ENCODE measurements at regions of chr5 and their contacts with region 1.

Region 1: GRCh38 chr5:53170748-53171349 is 61.3 kb upstream of the MOCS2 start:
- DNase-seq: no peak
- ATAC-seq: peak; percentile 66; the same call in 2 of the 3 replicates
- H3K4me3 ChIP-seq: no peak overlapping the region
- H3K27ac ChIP-seq: no peak overlapping the region
- H3K4me1 ChIP-seq: no peaks in the 10 kb centered on the region
- H3K27me3 ChIP-seq: no peaks in the 10 kb centered on the region
- CTCF ChIP-seq: peak; percentile 48 to 56 (median 56); a peak in 5 of 6 replicates
- EP300 ChIP-seq: no peak
- POLR2A ChIP-seq: no peak
- RAD21 ChIP-seq: peak; percentile 80

Region 2: GRCh38 chr5:52943285-52943684 is 227.6 kb before region 1 on chr5:
- CTCF ChIA-PET with region 1: no interaction called
- POLR2A ChIA-PET with region 1: no interaction called
- RAD21 ChIA-PET with region 1: no interaction called
- SMC1A ChIA-PET with region 1: no interaction called
- in situ Hi-C with region 1: no loop called
- intact Hi-C with region 1: no loop called
- DNase-seq: no peak
- ATAC-seq: peak; percentile 73
- H3K4me3 ChIP-seq: no peak overlapping the region
- H3K27ac ChIP-seq: no peak overlapping the region
- H3K4me1 ChIP-seq: no peaks in the 10 kb centered on the region
- H3K27me3 ChIP-seq: no peaks in the 10 kb centered on the region
- CTCF ChIP-seq: peak in 2 of 3 experiments; percentile 9 to 19; a peak in 2 of 6 replicates
- EP300 ChIP-seq: no peak
- POLR2A ChIP-seq: no peak
- RAD21 ChIP-seq: no peak

Region 3: GRCh38 chr5:53425598-53426511 is 255.0 kb after region 1 on chr5:
- CTCF ChIA-PET with region 1: no interaction called
- POLR2A ChIA-PET with region 1: no interaction called
- RAD21 ChIA-PET with region 1: no interaction called
- SMC1A ChIA-PET with region 1: no interaction called
- in situ Hi-C with region 1: no loop called
- intact Hi-C with region 1: loop called (anchors 5 kb)
- DNase-seq: no peak
- ATAC-seq: peak; percentile 67
- H3K4me3 ChIP-seq: no peak overlapping the region
- H3K27ac ChIP-seq: no peak overlapping the region
- H3K4me1 ChIP-seq: no peaks in the 10 kb centered on the region
- H3K27me3 ChIP-seq: 0 out of 4 replicates have a peak, but pooled peaks cover 0 to 2% of the 10 kb centered on the region in 2 experiments
- CTCF ChIP-seq: peak in 2 of 3 experiments; percentile 21 to 42; a peak in 2 of 6 replicates
- EP300 ChIP-seq: no peak
- POLR2A ChIP-seq: no peak
- RAD21 ChIP-seq: peak; percentile 55

Region 4: DNA sequence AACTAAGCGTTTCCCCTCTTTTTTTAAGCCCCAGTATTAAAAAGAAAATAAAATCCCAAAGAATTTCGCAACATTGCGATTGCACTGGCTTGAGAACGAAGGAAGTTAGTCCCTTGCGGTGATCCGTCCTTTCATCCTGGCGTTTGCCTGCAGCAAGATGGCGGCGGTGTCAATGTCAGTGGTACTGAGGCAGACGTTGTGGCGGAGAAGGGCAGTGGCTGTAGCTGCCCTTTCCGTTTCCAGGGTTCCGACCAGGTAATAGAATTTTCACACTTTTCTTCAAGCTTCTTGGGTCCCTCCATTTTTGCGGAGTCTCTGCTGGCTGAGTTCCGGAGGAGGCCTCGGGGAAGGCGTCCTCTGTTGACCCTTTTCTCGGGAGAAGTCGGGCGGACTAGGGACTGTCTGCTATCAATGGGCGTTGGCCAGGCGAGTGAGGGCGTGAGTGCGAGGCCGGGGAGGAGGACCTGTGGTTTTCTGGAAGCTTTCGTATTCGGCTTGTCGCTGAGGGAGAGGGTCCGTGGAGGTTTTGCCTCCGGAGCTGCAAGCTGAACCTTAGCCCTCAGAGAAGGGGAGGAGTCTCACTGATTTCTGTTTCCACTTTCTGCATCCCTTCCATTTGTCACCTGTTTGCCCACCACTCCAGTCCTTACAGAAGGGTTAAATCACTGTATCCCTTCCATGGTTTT is 389.8 kb after region 1 on chr5 and contains the start of gene NDUFS4:
- CTCF ChIA-PET with region 1: no interaction called
- POLR2A ChIA-PET with region 1: no interaction called
- RAD21 ChIA-PET with region 1: no interaction called
- SMC1A ChIA-PET with region 1: no interaction called
- in situ Hi-C with region 1: no loop called
- intact Hi-C with region 1: no loop called
- DNase-seq: peak; percentile 45
- ATAC-seq: peak; percentile 91
- H3K4me3 ChIP-seq: peak within 1 kb of the TSS; percentile 93
- H3K27ac ChIP-seq: peak within 1 kb of the TSS; percentile 87
- H3K4me1 ChIP-seq: no peaks in the 10 kb centered on the region
- H3K27me3 ChIP-seq: no peaks in the 10 kb centered on the region
- CTCF ChIP-seq: no peak
- EP300 ChIP-seq: no peak
- POLR2A ChIP-seq: peak; percentile 93
- RAD21 ChIP-seq: no peak
- polyA plus RNA-seq, gene NDUFS4: 303 to 366 TPM

Region 5: GRCh38 chr5:54229041-54229780 is 1058.4 kb after region 1 on chr5:
- CTCF ChIA-PET with region 1: interaction called, 12 read pairs
- POLR2A ChIA-PET with region 1: no interaction called
- RAD21 ChIA-PET with region 1: interaction called, 9 read pairs
- SMC1A ChIA-PET with region 1: interaction called, 6 read pairs
- in situ Hi-C with region 1: loop called (anchors 5 kb)
- intact Hi-C with region 1: loop called (anchors 2 kb)
- DNase-seq: no peak
- ATAC-seq: peak; percentile 95
- H3K4me3 ChIP-seq: no peak overlapping the region
- H3K27ac ChIP-seq: no peak overlapping the region
- H3K4me1 ChIP-seq: no peaks in the 10 kb centered on the region
- H3K27me3 ChIP-seq: no peaks in the 10 kb centered on the region
- CTCF ChIP-seq: peak; percentile 86 to 94 (median 90)
- EP300 ChIP-seq: no peak
- POLR2A ChIP-seq: no peak
- RAD21 ChIP-seq: peak; percentile 89

Region 6: DNA sequence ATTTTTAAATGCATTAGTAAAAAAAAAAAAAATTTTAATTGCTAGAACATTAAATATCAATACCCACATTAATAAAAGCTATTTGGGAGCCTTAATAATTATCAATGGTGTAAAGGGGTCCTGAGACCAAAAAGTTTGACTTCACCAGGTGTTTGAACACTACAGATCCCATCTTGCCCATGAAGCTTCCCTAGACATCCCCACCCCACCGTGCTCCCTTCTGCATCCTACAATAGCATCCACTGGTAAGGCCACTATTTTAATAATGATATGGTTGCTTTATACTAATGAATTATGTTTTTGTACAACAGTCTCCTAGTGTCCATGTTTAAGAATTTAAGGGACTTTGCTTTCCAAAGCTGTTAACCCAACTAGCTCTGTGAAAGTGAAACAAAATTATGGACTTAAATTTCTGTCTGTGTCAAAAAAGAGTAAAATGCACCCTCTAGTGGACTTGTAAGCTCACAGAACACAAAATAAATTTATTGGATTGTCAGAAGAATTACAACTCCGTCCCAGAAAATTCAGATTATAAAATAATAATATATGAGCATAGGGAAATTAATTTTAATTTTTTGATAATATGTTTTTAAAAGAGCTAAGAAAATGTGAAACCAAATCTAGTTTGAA is 1063.6 kb after region 1 on chr5:
- CTCF ChIA-PET with region 1: interaction called, 12 read pairs
- POLR2A ChIA-PET with region 1: no interaction called
- RAD21 ChIA-PET with region 1: interaction called, 9 read pairs
- SMC1A ChIA-PET with region 1: interaction called, 6 read pairs
- in situ Hi-C with region 1: loop called (anchors 5 kb)
- intact Hi-C with region 1: loop called (anchors 2 kb)
- DNase-seq: no peak
- ATAC-seq: peak; percentile 72
- H3K4me3 ChIP-seq: no peak overlapping the region
- H3K27ac ChIP-seq: no peak overlapping the region
- H3K4me1 ChIP-seq: no peaks in the 10 kb centered on the region
- H3K27me3 ChIP-seq: no peaks in the 10 kb centered on the region
- CTCF ChIP-seq: peak; percentile 26 to 50 (median 50); a peak in 5 of 6 replicates
- EP300 ChIP-seq: no peak
- POLR2A ChIP-seq: no peak
- RAD21 ChIP-seq: peak; percentile 66

Measured in GM12878 (cell line).